ENCODE measurements at regions of chr4 and their contacts with region 1.

Region 1: DNA sequence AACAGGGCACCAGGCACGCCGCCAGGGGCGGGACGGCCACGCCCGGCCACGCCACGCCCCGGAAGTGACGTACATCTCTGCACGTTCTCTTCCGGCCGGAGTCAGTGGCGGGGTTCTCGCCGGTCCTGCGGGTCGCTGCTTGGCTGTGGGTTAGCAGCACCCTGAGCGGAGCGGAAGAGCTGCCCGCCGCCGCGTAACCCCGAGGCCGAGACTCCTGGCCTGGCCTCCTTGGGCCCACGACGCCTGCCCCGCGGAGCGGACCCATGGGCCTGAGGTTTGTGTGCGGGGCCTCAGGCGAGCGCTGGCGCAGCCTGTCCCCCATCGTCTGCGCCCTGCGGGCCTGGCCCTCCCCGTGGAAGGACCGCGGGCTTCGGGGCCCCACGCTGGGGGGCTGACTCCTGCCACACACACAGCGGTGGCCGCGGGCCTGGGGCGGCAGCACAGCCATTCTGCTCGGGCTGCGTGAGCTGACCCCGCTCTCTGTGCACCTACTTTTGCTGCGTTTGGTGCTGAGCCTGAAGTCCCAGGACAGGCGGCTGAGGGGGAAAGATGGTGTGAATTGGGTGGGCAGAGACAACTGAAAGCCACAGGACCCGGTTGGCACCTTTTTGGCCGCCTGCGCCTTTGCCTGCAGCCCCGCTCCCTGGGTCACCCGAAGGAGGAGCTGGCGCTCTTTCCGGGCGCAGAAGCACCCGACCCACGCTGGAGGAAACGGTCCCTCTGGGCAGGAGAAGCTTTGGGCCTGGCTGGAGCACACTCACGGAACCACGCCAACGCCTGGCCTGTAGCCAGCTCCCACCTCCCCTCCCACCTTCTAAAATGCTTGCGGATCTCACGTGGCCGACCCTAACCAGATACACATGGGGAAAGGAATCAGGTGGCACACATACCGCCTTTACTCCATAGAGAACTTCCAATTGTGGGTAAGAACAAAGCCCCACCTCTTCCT is 28.1 kb downstream of the NOP14 start:
- DNase-seq: peak; percentile 96
- ATAC-seq: peak; percentile 58
- H3K4me3 Mint-ChIP-seq: peak overlapping the region; percentile 85
- H3K27ac Mint-ChIP-seq: peak overlapping the region; percentile 90
- H3K4me1 Mint-ChIP-seq: peaks cover 68% of the 10 kb centered on the region
- H3K27me3 Mint-ChIP-seq: no peaks in the 10 kb centered on the region

Region 2: DNA sequence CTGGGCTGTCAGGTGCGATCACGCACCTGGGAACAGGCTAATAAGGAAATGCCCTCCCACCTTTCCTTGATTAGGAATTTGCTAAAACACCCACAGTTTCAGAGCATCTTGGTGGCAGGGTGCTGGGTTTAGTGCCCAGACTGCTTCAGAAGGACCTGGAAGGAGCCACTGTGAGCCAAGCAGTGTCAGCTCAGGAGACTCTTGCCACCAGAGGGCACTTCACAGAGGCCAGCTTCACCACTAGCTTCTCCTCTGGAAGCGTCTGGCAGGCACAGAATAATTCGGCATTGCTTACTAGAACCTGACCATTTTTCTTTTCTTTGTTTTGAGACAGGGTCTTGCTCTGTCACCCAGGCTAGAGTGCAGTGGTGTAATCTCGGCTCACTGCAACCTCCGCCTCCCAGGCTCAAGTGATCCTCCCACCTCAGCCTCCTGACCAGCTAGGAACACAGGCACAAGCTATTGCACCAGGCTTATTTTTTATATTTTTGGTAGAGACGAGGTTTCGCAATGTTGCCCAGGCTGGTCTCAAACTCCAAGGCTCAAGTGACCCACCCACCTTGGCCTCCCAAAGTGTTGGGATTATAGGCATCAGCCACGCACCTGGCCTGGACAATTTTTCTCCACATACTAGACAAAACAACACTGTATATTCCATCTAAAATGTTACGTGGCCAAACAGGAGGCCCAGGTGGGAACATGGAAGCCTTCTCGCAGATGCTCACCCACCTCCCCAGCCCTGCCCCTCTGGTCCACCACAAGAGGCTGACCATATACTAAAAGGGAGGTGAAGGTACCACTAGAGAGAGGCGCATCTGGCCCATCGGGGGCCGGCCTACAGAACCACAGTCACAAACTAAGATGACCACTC is 14.0 kb after region 1 on chr4:
- CTCF ChIA-PET with region 1: interaction called, 65 read pairs
- DNase-seq: no peak
- ATAC-seq: peak; percentile 49
- H3K4me3 Mint-ChIP-seq: no peak overlapping the region
- H3K27ac Mint-ChIP-seq: no peak overlapping the region
- H3K4me1 Mint-ChIP-seq: peaks cover 29% of the 10 kb centered on the region
- H3K27me3 Mint-ChIP-seq: no peaks in the 10 kb centered on the region

Region 3: GRCh38 chr4:2963175-2963965 is 28.3 kb after region 1 on chr4 and contains the starts of genes GRK4 and NOP14:
- CTCF ChIA-PET with region 1: interaction called, 25 read pairs
- DNase-seq: peak; percentile 99
- ATAC-seq: peak; percentile 87
- H3K4me3 Mint-ChIP-seq: peak within 1 kb of the TSS; percentile 78
- H3K27ac Mint-ChIP-seq: peak within 1 kb of the TSS; percentile 77
- H3K4me1 Mint-ChIP-seq: peaks cover 42% of the 10 kb centered on the region
- H3K27me3 Mint-ChIP-seq: peaks cover 7% of the 10 kb centered on the region
- total RNA-seq, gene GRK4: 3.0 to 4.4 TPM
- total RNA-seq, gene NOP14: 47.9 to 81.0 TPM

Region 4: DNA sequence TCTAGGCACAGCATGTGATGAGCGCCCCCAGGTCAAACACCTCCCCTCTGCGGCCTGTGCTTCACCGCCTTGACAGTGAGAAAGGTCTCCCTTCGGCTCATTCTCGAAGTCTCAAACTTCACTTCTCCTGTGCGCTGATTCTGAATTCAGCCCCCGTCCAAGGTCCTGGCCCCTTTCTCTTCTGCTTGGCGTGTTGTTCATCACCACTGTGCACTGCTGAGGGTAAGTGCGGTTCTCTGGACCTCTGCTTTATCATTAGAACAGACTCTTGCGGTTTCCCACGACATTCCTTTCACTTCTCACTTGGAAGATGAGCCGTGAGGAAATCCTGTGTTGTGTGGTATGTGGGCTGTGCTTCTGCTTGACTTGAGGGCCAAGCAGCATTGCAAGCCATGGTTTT is 127.4 kb after region 1 on chr4:
- CTCF ChIA-PET with region 1: no interaction called
- DNase-seq: no peak
- ATAC-seq: no peak
- H3K4me3 Mint-ChIP-seq: no peak overlapping the region
- H3K27ac Mint-ChIP-seq: no peak overlapping the region
- H3K4me1 Mint-ChIP-seq: no peaks in the 10 kb centered on the region
- H3K27me3 Mint-ChIP-seq: peaks cover 2% of the 10 kb centered on the region